ENCODE measurements at regions of chr12 and their contacts with region 1.

Region 1: DNA sequence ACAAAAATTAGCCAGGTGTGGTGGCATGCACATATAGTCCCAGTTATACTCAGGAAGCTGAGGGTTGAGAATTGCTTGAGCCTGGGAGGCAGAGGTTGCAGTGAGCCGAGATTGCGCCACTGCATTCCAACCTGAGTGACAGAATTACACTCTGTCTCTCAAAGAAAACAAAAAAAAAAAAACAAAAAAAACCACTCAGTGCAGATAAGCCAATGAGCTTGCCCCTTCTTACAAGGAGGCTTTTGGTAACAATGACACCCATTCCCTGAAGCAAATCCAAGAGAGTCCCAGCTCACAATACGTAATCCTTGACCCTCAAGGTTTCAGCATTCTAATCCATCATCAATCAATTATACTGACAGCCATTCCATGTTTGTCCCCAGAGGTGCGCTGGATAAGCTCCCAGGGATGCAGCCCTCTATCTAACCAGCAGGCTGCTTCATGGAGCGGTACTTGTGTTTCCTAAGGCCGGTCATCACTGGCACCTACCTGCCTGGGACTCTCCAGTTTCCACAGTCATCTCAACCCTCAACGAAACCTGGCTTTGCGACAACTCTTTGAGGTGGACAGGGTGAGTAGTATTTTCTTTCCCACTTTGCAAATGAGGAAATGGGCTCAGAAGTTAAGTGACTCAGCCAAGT is 12.4 kb downstream of the GCN1 start:
- DNase-seq: no peak
- ATAC-seq: peak in 1 of 8 donors; percentile 14
- H3K4me3 ChIP-seq: no peak overlapping the region
- H3K27ac ChIP-seq: no peak overlapping the region
- H3K4me1 ChIP-seq: peaks cover 0 to 13% (median 5%) of the 10 kb centered on the region in 9 donors
- H3K27me3 ChIP-seq: no peaks in the 10 kb centered on the region
- CTCF ChIP-seq: no peak

Region 2: DNA sequence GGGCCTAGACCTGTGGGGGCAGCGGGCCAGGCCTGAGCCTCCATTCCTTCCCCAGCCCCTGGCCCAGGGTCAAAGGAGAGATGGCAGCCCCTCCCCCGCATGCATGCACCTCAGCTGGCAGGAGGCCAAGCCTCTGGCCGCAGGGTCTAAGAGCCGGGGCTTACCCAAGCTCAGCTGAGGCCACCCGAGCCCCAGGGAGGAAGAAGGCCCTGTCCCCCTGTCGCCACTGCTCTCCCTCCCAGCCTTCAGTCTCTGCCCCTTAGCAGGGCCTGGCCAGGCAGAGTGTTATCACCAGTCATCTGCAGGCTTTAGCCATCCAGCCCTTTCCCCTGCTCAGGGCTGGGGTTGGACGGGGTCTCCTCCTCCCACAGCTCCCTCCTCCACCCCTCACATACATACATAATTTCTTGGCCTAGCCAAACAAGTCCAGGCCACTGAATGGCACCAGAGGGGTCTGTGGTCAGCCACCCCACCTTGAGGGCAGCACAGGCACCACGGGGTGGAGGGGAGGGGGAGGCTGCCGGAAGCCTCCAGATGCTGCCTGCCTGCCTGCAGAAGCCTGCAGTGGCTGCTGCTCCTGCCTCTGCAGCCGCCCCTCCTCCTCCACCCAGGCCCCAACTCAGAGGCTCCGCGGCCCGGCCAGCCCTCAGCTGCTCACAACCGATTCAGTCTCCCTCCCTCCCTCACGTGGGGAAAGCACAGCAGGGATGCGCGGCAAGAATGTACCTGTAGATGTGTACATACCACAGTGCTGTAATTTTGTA is 88.3 kb before region 1 on chr12:
- intact Hi-C with region 1: no loop called
- DNase-seq: no peak
- ATAC-seq: peak in 4 of 8 donors; percentile 4 to 15 (median 6)
- H3K4me3 ChIP-seq: no peak overlapping the region
- H3K27ac ChIP-seq: no peak overlapping the region
- H3K4me1 ChIP-seq: peaks cover 0 to 19% (median 0%) of the 10 kb centered on the region in 9 donors
- H3K27me3 ChIP-seq: no peaks in the 10 kb centered on the region
- CTCF ChIP-seq: no peak

Region 3: GRCh38 chr12:120132863-120133385 is 49.2 kb before region 1 on chr12:
- intact Hi-C with region 1: loop called in 1 of 10 experiments (anchors 10 kb)
- DNase-seq: no peak
- ATAC-seq: peak in 6 of 8 donors; percentile 16 to 63 (median 54)
- H3K4me3 ChIP-seq: no peak overlapping the region
- H3K27ac ChIP-seq: peak overlapping the region in 8 of 10 donors; percentile 10 to 75 (median 43)
- H3K4me1 ChIP-seq: peaks cover 0 to 32% (median 13%) of the 10 kb centered on the region in 9 donors
- H3K27me3 ChIP-seq: no peaks in the 10 kb centered on the region
- CTCF ChIP-seq: no peak